Posterior cingulate gyrus (tissue), 11 donors: ENCODE measurements at regions of chr11 and their contacts with region 1.

Region 1: DNA sequence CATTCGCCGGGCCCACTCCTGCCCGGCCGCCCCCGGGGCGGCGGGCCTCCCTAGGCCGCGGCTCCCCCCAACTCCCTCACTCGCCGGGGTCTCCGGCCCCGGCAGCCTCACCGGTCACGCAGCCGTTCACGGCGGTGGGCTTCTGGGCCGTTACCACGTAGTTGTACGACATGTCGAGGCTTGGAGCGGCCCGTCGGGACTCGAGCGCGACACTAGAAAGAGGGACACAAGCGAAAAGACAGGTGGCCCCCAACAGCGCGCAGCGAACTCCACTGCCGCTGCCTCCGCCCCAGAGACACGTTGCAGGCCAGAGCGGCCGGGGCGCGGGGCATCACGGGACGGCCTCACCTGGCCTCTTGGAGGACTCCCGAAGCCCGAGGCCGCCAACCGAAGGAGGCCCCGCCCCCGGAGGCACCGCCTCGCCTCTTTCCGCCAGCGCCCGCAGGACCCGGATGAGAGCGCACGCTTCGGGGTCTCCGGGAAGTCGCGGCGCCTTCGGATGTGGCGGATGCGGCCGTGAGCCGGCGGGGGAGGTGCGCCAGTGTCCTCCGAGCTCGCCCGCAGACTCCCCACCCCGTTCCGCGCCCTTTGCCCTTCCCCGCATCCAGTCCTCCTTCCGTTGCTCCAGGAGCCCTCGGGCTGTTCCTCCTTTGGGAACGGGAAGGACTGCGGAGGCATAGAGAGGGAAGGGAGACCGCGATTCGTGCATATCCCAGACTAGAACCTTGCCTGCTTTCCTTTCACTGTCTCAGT is at the starts of genes DDB1 and TKFC:
- DNase-seq: peak; percentile 93 to 100 (median 96)

Region 2: GRCh38 chr11:61361686-61362541 is 28.9 kb after region 1 on chr11 and contains the starts of genes CYB561A3 and TMEM138:
- intact Hi-C with region 1: loop called (anchors 1 kb)
- DNase-seq: peak; percentile 89 to 99 (median 94)

Region 3: DNA sequence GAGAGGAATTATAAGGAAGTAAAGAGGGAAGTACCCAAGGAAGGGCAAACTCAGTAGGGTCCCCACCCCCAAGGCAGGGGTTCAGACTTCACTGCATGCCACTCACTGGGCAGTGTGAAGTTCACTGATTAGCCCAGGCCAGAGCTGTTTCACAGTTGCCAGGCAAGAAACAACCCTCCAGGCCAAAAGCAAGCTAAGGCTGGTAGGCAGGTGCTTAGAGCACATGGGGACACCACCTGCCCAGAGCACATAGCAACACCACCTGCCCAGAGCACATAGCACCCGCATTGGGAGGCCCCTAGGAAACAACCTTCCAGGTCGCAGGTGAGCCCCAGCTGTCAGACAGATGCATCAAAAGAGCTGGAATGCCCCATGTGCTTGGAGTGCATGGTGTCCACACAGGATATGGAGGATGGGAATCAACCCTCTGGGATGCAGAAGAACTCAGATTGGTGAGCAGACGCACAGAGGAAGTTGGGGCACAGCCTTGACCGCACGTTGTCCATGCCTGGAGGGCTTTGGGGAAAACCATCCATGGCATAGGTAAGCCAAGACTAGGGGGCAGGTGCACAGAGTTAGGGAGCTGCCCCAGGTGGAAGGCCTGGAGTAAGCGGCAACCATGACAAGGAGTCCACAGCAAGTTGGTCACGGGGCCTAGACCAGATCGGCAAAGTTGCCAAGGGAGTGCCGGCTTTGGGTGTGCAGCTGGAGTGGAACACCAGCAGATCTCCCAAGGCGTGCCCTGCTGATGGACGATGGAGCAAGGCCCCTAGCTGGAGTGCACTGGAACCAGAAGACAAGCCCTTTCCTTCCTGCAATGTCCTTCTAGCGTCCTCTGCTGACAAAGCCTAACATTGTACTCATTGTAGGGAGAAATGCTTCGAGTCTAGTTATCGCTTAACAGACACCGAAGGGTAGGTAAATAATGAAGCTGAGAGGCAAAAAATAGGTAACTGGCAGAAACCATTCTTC is 51.6 kb after region 1 on chr11:
- intact Hi-C with region 1: loop called (anchors 1 kb)
- DNase-seq: no peak

Region 4: GRCh38 chr11:61429691-61430582 is 97.0 kb after region 1 on chr11 and contains the starts of genes CPSF7 and SDHAF2:
- intact Hi-C with region 1: loop called (anchors 10 kb)
- DNase-seq: peak; percentile 96 to 100 (median 98)